CD8-positive, alpha-beta memory T cell (primary cell): ENCODE measurements at regions of chr1 and their contacts with region 1.

Region 1: DNA sequence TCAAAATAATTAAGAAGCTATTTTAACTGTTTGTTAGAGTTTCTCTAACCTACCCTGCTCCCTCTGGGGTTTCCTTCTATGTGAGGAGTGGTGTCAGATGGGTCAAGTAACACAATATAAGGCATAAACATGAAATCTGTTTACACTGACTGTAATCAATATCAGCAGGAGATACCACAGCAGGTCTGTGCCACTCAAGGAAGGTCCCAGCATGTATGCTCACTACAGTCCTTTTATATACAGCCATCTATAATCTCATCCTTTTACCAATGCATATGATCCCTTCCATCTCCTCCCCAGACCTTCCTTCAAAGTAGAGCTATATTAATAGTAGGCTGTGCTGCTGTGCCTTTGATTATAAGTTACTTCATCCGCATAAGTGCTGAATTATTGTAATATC is 25.4 kb downstream of the EEIG2 start:
- DNase-seq: no peak
- H3K4me3 ChIP-seq: no peak overlapping the region
- H3K4me3 Mint-ChIP-seq: no peak overlapping the region
- H3K27ac ChIP-seq: no peak overlapping the region
- H3K27ac Mint-ChIP-seq: peak overlapping the region in 7 of 8 donors; percentile 16 to 70 (median 57)
- H3K4me1 ChIP-seq: peaks cover 5% of the 10 kb centered on the region
- H3K4me1 Mint-ChIP-seq: peaks cover 38 to 65% (median 63%) of the 10 kb centered on the region in 3 donors
- H3K27me3 ChIP-seq: no peaks in the 10 kb centered on the region
- H3K27me3 Mint-ChIP-seq: no peaks in the 10 kb centered on the region

Region 2: DNA sequence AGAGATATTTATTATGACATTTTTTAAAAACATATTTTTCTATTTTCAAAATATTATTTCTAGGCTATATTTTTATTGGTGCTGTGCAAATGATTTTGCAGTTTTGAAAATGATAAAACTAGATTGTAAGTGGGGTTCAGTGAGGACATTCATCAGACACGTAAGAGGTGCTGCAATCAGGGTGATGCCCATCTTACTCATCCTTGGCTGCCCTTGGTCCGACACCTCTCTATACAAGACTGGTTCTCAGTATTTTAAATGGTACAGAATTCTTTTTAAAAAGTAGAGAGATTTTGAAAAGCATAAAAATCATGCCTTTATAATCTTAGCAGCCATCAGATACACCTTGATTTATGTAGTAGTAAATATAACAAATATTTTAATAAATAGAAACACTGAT is 51.5 kb after region 1 on chr1:
- CTCF ChIA-PET with region 1: no interaction called
- POLR2A ChIA-PET with region 1: interaction called, 11 read pairs
- DNase-seq: no peak
- H3K4me3 ChIP-seq: no peak overlapping the region
- H3K4me3 Mint-ChIP-seq: no peak overlapping the region
- H3K27ac ChIP-seq: no peak overlapping the region
- H3K27ac Mint-ChIP-seq: no peak overlapping the region
- H3K4me1 ChIP-seq: peaks cover 8% of the 10 kb centered on the region
- H3K4me1 Mint-ChIP-seq: peaks cover 16 to 18% (median 17%) of the 10 kb centered on the region in 3 donors
- H3K27me3 ChIP-seq: no peaks in the 10 kb centered on the region
- H3K27me3 Mint-ChIP-seq: no peaks in the 10 kb centered on the region

Region 3: DNA sequence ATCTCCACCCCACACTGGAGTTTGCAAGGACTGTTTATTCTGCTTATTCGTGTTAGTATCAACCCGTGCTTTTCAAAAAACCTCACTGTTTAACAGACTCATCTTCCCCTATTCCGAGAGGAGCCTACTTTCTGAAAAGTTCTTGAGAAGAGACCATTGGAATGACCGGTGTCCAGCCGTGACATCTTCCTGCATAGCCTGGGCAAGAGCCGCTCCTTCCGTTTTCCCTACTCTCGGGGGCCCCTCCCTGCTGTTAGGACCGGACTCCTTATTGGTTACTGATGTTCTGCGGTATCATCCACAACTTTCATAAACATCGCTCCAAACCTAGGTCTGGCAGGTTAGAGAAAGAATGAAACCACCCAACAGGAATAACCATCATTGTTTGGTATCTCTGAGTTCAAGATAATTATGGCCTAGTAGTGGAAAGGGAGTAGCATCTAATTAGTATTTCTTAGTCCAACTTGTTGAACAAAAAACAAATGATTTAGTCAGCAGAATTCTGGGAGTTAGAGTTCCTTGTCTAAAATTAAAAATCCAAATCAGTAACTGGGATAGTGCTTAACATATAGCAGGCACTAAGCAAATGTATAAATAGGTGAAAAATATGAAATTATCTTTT is 162.0 kb after region 1 on chr1:
- CTCF ChIA-PET with region 1: no interaction called
- POLR2A ChIA-PET with region 1: no interaction called
- DNase-seq: peak; percentile 6 to 54 (median 25)
- H3K4me3 ChIP-seq: peak overlapping the region; percentile 68
- H3K4me3 Mint-ChIP-seq: peak overlapping the region; percentile 91 to 99 (median 93)
- H3K27ac ChIP-seq: peak overlapping the region; percentile 87
- H3K27ac Mint-ChIP-seq: peak overlapping the region; percentile 92 to 100 (median 98)
- H3K4me1 ChIP-seq: peaks cover 30% of the 10 kb centered on the region
- H3K4me1 Mint-ChIP-seq: peaks cover 37 to 47% (median 42%) of the 10 kb centered on the region in 3 donors
- H3K27me3 ChIP-seq: no peaks in the 10 kb centered on the region
- H3K27me3 Mint-ChIP-seq: peaks cover 0 to 3% of the 10 kb centered on the region in 2 donors